Common myeloid progenitor, CD34-positive (primary cell): ENCODE measurements at regions of chr2 and their contacts with region 1.

Region 1: GRCh38 chr2:55168221-55169154 is 63.6 kb downstream of the CLHC1 start:
- DNase-seq: peak; percentile 64 to 82 (median 78)
- H3K4me3 ChIP-seq: no peak overlapping the region
- H3K27ac ChIP-seq: no peak overlapping the region
- H3K4me1 ChIP-seq: peaks cover 0 to 2% (median under 1%) of the 10 kb centered on the region in 4 experiments
- H3K27me3 ChIP-seq: no peaks in the 10 kb centered on the region

Region 2: GRCh38 chr2:55010149-55010591 is 158.3 kb before region 1 on chr2:
- CTCF ChIA-PET with region 1: interaction called, 137 read pairs
- POLR2A ChIA-PET with region 1: no interaction called
- DNase-seq: peak; percentile 50 to 90 (median 82)
- H3K4me3 ChIP-seq: peak overlapping the region in 6 of 7 experiments; percentile 58 to 82 (median 74)
- H3K27ac ChIP-seq: peak overlapping the region; percentile 28 to 66
- H3K4me1 ChIP-seq: peaks cover 19 to 65% (median 45%) of the 10 kb centered on the region in 4 experiments
- H3K27me3 ChIP-seq: no peaks in the 10 kb centered on the region

Region 3: DNA sequence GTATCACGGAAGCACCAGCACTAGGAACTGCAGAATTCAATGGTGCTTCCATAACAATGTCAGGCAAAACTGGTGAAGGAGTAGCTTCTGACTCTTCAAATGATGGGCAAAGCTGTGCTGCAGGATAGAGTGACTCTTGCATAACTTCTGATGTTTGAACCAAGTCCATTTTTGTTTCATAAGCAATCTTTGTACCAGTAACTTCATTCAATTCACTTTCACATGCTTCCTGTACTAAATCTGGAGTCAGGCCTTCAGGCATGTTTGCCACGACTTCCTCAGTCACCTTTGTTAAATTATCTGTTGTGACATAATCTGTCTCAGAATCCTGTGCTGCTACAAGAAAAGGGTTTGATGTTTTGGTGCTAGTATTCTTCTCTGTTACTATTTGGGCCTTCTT is 142.3 kb before region 1 on chr2:
- CTCF ChIA-PET with region 1: interaction called, 13 read pairs
- POLR2A ChIA-PET with region 1: no interaction called
- DNase-seq: peak in 1 of 3 donors; percentile 36
- H3K4me3 ChIP-seq: no peak overlapping the region
- H3K27ac ChIP-seq: peak overlapping the region in 1 of 2 experiments; percentile 47
- H3K4me1 ChIP-seq: peaks cover 12 to 55% (median 28%) of the 10 kb centered on the region in 4 experiments
- H3K27me3 ChIP-seq: no peaks in the 10 kb centered on the region

Region 4: GRCh38 chr2:55111570-55112228 is 56.8 kb before region 1 on chr2:
- CTCF ChIA-PET with region 1: interaction called, 11 read pairs
- POLR2A ChIA-PET with region 1: interaction called, 3 read pairs
- DNase-seq: peak; percentile 85 to 97 (median 97)
- H3K4me3 ChIP-seq: peak overlapping the region in 5 of 7 experiments; percentile 2 to 43 (median 30)
- H3K27ac ChIP-seq: peak overlapping the region; percentile 71 to 88
- H3K4me1 ChIP-seq: peaks cover 21 to 76% (median 40%) of the 10 kb centered on the region in 4 experiments
- H3K27me3 ChIP-seq: no peaks in the 10 kb centered on the region

Region 5: DNA sequence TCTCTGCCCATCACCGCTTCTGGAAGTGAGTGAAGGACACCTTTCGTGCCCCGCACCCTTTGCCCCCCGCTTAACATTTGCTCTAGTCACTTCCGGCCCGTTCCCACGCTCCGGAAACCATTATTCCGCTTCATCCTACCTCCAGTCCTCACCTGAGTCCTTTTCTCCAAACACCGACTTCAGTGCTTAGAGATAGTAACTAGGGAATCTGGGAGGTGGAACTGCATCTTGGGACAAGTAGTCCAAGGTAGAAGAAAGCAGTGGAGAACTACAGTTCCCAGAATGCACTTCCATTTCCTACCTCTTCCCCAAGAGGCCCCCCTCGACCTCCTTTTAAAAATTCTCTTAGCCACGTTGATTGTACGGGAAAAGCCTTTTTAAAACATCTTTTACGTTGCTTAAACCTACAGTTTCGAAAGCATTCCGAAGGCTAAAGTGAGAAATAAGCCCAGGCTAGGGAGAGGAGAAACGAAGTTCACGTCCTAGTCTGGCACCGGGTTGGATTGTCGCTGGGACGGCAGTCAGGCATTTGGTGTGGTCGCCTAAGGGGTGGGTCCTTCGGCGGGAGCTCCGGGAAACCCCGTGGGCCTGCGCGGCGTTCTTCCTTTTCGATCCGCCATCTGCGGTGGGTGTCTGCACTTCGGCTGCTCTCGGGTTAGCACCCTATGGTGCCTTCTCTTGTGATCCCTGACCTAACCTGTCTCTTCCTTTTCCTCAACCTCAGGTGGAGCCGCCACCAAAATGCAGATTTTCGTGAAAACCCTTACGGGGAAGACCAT is 63.8 kb after region 1 on chr2 and contains the starts of genes CLHC1 and RPS27A:
- CTCF ChIA-PET with region 1: no interaction called
- POLR2A ChIA-PET with region 1: no interaction called
- DNase-seq: peak; percentile 93 to 96 (median 95)
- H3K4me3 ChIP-seq: peak within 1 kb of the TSS; percentile 86 to 100 (median 93)
- H3K27ac ChIP-seq: peak within 1 kb of the TSS; percentile 98 to 99
- H3K4me1 ChIP-seq: peaks cover 0 to 41% (median 33%) of the 10 kb centered on the region in 4 experiments
- H3K27me3 ChIP-seq: no peaks in the 10 kb centered on the region